ENCODE measurements at regions of chr9 and their contacts with region 1.

Region 1: GRCh38 chr9:35306283-35306682 is 144.5 kb downstream of the UNC13B start:
- DNase-seq: no peak
- H3K4me3 ChIP-seq: no peak overlapping the region
- H3K27ac ChIP-seq: no peak overlapping the region
- H3K4me1 ChIP-seq: no peaks in the 10 kb centered on the region
- H3K27me3 ChIP-seq: peaks cover 0 to 4% (median 0%) of the 10 kb centered on the region in 7 donors
- CTCF ChIP-seq: no peak
- POLR2A ChIP-seq: no peak

Region 2: DNA sequence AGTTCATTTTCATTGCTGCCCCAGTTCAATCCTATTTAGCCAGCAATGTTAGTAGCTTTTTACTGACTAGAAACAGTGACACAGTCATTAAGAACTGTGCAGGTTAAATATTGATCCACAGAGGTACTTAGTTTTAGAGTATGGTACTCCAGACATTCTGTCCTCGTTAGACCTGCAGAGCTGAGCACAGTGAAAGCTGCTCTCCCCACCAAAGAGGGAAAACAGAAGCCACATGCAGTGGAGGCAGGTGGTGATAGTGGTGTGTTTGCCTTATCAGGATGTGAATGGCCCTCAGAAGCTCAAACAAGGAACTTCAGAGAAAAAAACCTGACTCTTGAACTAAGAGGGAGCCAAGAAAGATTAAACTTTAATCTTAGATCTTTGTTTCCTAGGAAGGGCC is 69.0 kb before region 1 on chr9:
- intact Hi-C with region 1: loop called (anchors 10 kb)
- DNase-seq: no peak
- H3K4me3 ChIP-seq: no peak overlapping the region
- H3K27ac ChIP-seq: no peak overlapping the region
- H3K4me1 ChIP-seq: no peaks in the 10 kb centered on the region
- H3K27me3 ChIP-seq: no peaks in the 10 kb centered on the region
- CTCF ChIP-seq: no peak
- POLR2A ChIP-seq: no peak

Measured in spleen (tissue), 13 donors.